Mammary epithelial cell (primary cell): ENCODE measurements at regions of chr6 and their contacts with region 1.

Region 1: DNA sequence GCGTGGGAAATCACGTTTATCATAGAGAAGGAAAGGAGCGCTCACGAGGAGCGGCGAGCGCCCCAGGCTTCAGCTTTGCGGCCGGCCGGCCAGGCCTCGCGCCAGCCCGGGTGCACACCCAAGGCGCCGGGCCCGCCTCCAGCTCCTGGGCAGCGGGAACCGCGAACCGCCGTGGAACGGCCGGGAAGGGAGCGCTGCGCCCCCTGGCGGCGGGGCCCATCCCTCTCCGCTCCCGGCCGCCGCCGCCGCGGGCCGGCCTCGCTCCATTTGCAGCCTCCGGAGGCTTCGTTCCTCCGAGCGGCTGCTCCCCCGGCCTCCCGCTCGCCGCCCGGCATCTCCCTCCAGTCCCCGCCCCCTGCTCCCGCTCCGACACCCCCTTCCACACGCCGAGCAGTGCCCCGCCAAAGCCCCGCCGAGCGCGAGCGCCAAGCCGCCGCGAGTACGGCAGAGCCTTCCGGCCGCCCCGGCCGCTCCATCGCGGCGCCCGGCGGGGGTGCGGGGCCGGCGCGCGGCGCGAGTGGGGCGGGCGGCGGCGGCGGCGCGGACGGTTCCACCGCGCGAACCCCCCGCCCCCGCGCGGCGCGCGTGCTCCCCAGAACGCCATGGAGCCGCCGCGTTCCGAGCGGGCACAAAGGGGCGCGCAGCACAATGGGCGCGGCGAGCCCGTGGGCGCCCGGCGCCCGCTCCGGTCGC is 956 bp downstream of the BEND3 start:
- DNase-seq: peak; percentile 84
- H3K4me3 ChIP-seq: peak overlapping the region; percentile 29 to 68 (median 64)
- H3K27ac ChIP-seq: peak overlapping the region; percentile 28
- H3K4me1 ChIP-seq: peaks cover 21% of the 10 kb centered on the region
- H3K27me3 ChIP-seq: no peaks in the 10 kb centered on the region
- CTCF ChIP-seq: peak; percentile 31 to 60

Region 2: GRCh38 chr6:107033126-107033525 is 81.2 kb before region 1 on chr6:
- CTCF ChIA-PET with region 1: no interaction called
- dilution Hi-C with region 1: no loop called
- in situ Hi-C with region 1: no loop called
- intact Hi-C with region 1: loop called (anchors 1 kb)
- DNase-seq: no peak
- H3K4me3 ChIP-seq: no peak overlapping the region
- H3K27ac ChIP-seq: no peak overlapping the region
- H3K4me1 ChIP-seq: peaks cover 23% of the 10 kb centered on the region
- H3K27me3 ChIP-seq: no peaks in the 10 kb centered on the region
- CTCF ChIP-seq: no peak

Region 3: DNA sequence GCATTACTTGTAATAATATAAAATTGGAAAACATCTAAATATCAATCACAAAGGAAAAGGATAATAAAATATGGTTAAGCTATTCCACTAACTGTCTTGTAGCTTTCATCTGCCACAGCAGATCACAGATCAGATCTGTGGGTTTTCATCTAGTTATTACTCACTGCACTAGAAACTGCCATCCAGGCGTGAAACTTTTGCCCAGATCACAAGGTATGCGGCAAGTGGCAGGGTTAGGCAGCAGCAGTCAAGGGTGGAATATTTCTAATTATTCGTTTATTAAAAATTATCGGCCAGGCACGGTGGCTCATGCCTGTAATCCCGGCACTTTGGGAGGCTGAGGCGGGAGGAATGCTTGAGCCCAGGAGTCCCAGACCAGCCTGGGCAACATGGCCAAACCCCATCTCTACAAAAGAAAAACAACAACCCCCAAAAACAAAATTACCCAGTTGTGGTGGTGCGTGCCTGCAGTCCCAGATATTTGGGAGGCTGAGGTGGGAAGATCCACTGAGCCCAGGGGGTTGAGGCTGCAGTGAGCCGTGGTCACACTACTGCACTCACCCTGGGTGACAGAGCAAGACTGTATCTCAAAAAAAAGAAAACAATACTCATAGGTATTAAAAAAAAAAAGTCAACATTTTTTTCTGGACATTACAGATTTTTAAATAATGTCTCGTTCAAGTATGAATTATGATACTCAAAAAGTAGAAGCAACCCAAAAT is 31.2 kb before region 1 on chr6:
- CTCF ChIA-PET with region 1: interaction called, 4 read pairs
- dilution Hi-C with region 1: no loop called
- in situ Hi-C with region 1: no loop called
- intact Hi-C with region 1: loop called (anchors 2 kb)
- DNase-seq: no peak
- H3K4me3 ChIP-seq: no peak overlapping the region
- H3K27ac ChIP-seq: no peak overlapping the region
- H3K4me1 ChIP-seq: peaks cover 8% of the 10 kb centered on the region
- H3K27me3 ChIP-seq: no peaks in the 10 kb centered on the region
- CTCF ChIP-seq: no peak